GM18951 (cell line): ENCODE measurements at regions of chr5 and their contacts with region 1.

Region 1: DNA sequence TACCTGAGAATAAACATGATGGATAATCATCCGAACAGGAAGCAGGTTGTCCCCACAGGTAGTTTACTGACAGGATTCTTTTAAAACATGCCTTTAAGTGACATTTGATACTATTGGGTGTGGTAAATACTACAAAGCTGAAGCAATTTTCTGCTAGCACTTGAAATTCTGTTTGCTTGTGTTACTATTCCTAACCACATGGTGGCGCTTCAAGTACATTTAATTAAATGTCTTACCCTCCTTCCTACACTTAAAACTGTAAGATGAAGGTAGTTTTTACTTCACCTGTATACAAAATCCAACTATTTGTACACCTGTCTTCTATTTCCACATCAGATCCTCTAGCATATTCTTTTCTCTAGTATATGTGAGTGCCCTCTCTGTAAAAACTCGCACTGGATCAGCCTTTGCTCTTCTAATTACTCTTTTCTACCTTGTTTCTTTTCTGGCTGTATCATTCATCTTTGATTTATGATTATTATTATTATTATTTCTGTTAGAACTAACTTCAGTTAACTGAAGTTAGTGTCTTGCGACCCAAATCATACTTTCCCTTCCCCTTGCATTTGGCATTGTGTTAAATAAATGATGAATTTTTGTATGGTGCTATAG is 18.4 kb downstream of the SLC25A46 start:
- POLR2A ChIP-seq: no peak

Region 2: DNA sequence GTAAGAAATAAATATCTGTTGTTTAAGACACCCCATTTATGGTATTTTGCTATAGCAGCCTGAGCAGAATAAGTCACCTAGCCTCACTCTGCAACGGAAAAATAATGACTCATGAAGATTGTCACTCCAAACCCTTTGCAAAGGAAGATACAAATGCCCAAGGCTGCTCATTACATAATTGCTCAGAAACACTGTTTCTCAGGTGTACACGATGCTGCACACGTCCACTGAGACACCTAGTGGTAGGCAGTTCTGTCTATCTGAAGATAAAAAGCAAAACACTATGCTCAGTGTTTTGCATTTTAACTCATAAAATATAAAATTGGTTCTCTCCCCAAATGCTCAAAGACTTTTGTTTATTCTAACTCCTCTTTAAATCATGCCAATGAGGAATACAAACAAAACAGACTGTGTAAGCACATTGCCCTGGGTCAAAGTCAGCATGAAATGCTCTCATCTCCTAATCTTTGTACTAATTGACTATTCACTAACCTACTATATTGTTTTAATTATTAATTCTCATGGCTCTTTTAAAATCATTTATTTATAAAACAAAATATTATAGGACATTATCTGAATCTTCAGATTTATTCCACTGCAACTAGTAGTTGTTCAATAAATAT is 306.6 kb after region 1 on chr5:
- in situ Hi-C with region 1: loop called (anchors 10 kb)
- POLR2A ChIP-seq: no peak

Region 3: DNA sequence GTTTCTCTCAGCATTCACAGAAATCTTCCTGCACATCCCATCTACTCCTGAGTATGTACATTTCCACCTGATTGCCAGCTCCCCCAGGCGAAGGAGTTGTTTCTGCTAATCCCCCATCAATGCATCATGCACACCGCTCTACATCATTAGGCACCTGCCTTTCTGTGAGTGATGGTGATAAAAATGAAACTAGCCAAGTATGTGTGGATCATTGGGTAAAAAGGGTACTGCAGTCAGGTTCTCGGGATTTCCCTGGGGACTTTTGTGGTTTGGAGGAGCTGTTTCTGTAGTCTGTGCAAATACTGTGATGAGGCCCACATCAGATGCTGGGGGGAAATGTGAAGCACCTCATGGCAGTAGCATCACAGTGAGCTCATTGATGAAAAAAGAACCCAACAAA is 497.4 kb after region 1 on chr5:
- in situ Hi-C with region 1: loop called (anchors 25 kb)
- POLR2A ChIP-seq: no peak

Region 4: DNA sequence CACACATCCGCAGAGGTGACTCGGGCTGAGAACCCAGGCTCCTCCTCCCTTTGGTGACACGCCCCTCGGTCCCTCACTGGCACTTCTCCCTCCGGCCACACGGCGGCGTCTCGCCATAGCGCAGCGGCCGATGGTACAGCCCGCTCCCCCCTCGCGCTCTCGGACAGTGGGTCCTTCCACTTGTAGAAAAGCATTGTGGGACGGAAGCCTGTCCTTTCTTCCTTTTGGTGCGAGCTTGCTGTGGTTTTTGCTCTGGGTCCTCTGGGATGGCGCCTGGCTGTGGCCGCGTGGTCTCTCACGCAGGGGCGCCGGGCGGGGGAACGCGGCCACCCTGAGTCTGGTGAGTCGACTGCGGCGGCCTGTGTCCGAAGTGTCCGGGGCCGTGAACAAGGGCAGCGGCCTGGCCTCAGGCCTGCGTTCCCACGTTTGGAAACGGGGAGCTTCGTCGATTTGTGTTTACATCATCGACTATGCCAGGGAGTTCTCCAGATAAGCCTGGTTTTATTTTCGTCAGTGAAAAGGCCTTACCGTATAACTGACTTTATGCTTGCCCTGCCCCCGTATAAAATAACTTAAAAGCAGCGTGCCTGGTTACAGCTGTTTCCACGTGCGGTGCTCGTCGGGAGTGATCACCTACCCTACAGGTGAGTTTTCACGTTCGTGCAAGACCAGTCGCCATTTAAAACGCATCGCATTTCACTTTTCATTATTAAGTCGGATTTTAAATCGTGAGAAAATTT is 1403.6 kb after region 1 on chr5:
- in situ Hi-C with region 1: loop called (anchors 25 kb)
- POLR2A ChIP-seq: peak; percentile 96